AG04449 (cell line): ENCODE measurements at regions of chr6 and their contacts with region 1.

Region 1: DNA sequence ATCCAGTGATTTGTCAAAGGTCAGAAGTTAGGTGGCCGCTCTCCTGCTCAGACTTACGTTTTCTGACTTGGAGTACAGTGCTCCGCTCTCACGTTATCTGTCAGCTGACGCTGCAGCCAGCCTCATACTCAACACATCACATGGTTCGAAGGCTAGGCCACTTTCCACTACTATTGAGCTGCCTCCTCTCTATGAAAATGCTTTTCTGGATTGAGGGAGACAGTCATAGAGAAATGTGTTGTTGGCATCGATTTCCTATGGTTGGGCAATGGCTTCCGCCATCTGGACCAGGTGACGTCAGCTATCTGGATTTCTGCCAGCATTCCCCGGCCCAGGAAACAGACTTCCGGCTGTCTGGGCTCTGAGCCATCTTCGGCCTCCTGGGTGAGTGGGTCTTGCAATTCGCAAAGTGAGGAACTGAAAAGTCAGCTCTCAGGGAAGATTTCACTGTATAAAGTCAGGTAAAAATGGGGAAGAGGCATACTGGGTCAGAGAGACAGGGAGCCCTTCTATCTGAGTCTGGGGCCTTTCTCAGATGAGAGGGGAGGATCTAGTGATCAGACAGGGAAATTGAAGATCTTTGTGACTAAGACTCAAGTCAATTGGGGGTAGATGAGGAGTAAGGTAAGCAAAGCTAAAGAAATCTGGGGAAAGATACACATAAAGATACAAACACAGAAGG is 37.5 kb upstream of the IER3 start:
- DNase-seq: peak; percentile 97
- H3K4me3 ChIP-seq: no peak overlapping the region
- CTCF ChIP-seq: no peak

Region 2: GRCh38 chr6:30283761-30284160 is 498.1 kb before region 1 on chr6:
- CTCF ChIA-PET with region 1: no interaction called
- POLR2A ChIA-PET with region 1: no interaction called
- DNase-seq: no peak
- H3K4me3 ChIP-seq: no peak overlapping the region
- CTCF ChIP-seq: no peak

Region 3: GRCh38 chr6:30340589-30341054 is 441.3 kb before region 1 on chr6:
- CTCF ChIA-PET with region 1: no interaction called
- POLR2A ChIA-PET with region 1: no interaction called
- DNase-seq: no peak
- H3K4me3 ChIP-seq: no peak overlapping the region
- CTCF ChIP-seq: no peak

Region 4: GRCh38 chr6:30752157-30752927 is 29.5 kb before region 1 on chr6:
- CTCF ChIA-PET with region 1: interaction called, 4 read pairs
- POLR2A ChIA-PET with region 1: interaction called, 43 read pairs
- DNase-seq: peak; percentile 100
- H3K4me3 ChIP-seq: 0 out of 2 replicates have a peak overlapping the region, but pooled peaks have one; percentile 4
- CTCF ChIP-seq: no peak

Region 5: DNA sequence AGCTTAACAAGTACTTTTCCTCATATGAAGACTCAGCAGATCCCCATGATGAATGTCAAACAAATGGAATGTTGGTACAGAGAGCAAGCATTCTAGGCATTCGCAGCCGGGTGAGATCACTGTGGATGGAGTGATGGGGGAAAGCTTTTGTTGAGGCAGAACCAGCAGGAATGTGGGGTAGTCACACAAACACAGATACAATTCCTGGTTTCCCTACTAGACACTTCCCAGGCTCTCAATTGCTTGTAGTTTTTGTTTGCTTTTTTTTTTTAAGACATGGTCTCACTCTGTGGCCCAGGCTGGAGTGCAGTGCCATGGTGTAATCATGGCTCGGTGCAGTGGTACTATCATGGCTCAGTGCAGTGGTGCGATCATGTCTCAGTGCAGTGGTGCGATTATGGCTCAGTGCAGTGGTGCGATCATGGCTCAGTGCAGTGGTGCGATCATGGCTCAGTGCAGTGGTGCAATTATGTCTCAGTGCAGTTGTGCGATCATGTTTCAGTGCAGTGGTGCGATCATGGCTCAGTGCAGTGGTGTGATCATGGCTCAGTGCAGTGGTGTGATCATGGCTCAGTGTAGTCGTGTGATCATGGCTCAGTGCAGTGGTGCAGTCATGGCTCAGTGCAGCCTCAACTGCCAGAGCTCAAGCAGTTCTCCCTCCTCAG is 22.2 kb before region 1 on chr6:
- CTCF ChIA-PET with region 1: interaction called, 5 read pairs
- POLR2A ChIA-PET with region 1: interaction called, 14 read pairs
- DNase-seq: peak; percentile 98
- H3K4me3 ChIP-seq: no peak overlapping the region
- CTCF ChIP-seq: no peak

Region 6: DNA sequence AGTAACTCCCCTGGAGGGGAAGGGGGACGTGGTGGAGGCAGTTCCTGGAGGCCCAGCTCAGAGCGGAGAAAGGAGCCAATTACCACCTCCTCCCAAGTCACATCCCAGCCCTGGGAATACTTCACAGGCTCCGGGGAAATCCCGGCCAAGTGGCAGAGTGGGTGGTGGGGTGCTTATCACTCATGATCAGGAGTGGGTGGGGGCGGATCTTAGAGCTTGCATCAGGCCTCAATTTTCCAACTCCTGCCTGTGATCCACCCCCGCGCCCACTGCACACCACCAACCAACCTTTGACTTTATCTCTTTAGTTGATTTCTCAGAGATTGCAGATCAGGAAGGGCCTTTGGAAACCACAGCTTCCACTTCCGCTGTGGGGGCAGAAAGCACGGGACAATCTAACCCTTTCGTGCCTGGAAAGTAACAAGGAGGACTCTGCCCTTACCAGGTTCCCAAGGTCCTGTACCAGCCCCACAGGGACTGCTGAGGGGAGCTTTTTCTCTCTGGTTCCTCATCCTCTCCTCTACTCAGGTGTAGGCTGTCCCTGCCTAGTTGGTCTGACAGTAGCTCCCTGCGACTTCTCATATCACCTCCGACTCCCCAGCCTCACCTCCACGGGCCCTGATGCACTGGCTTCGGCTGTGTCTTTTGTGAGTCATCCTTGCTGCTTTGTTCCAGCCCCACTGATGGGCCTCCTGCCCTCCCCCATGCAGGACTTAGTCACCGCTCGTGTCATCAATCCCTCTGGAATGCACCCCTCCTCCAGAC is 12.6 kb before region 1 on chr6:
- CTCF ChIA-PET with region 1: interaction called, 6 read pairs
- POLR2A ChIA-PET with region 1: interaction called, 42 read pairs
- DNase-seq: peak; percentile 87
- H3K4me3 ChIP-seq: peak overlapping the region; percentile 39
- CTCF ChIP-seq: no peak

Region 7: GRCh38 chr6:30870546-30870945 is 88.7 kb after region 1 on chr6:
- CTCF ChIA-PET with region 1: no interaction called
- POLR2A ChIA-PET with region 1: no interaction called
- DNase-seq: no peak
- H3K4me3 ChIP-seq: no peak overlapping the region
- CTCF ChIP-seq: no peak